Activated naive CD4-positive, alpha-beta T cell treated with anti-CD3 and anti-CD28 coated beads for 36 hours (primary cell): ENCODE measurements at regions of chr7 and their contacts with region 1.

Region 1: DNA sequence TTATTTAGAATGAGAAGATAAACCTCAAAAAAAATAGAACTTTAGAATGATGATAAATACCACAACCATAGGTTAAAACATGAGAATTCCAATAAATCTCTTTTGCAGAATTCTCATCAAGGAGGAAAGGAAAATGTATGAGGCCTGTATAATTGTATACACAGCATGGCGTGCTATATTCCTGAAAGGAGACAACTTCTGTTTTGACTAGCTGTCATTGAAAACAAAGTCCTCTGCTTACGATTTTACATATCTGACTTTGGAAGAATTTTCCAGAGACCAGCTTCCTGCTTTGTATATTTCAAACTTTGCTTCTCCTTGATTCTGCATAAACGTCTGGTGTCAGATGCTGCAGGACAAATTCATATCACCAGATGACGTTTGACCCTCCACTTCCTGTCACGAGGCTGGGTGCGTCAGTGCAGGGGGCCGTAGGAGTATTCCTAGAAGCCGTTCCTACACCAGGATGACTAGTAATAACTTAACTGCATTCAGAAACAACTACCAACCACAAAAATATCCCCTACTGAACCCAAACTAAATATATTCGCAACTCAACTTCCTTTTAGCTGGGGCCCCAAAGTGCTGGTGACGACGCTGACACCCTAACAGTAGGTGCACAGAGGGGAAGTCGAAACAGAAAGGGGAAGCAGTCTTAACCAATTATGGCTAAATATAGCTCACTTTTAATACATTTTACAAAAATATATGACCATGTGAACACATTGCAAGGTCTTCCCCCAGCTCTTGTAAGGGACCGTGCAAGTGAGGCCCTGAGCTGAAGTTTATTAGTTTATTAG is 178.6 kb upstream of the INHBA start:
- DNase-seq: peak; percentile 92
- H3K4me3 Mint-ChIP-seq: peak overlapping the region; percentile 19
- H3K27ac Mint-ChIP-seq: peak overlapping the region; percentile 98
- H3K4me1 Mint-ChIP-seq: peaks cover 53% of the 10 kb centered on the region
- H3K27me3 Mint-ChIP-seq: no peaks in the 10 kb centered on the region

Region 2: DNA sequence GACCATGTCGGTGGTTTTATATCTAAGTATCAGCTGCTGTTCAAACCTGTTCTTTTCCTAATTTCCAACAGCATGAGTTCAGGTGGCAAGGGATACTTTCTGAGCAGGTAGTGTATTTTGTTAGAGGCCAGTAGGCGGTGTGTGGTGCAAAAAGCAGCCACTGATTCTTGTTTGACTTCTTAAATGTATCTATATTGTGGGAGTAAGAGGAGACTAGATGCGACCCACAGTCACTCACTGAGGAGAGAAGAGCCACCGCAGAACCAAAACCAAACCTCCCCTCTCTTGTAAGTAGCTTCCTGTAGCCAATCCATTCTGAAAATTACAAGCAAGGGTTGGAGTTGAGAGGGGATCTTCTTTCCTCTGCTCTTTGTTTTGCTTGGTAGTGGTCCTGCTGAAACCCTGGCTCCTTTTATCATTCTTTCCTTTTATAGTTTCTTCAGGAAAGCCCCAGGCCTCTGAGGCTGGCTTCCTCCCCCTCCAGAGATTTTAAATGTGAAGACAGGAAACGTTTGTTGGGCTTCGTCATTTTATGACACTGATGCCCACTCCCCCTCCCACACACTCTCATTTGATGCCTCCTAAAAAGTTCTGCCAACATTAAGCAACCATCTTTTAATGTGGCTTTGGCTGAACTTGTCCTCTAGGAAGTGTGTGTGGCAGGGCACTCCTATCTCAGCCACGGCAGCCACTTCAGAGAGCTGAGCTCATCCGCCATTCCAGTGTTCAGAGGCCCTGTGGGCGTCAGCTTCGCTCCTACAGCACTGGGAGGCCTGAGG is 1180.7 kb before region 1 on chr7:
- CTCF ChIA-PET with region 1: no interaction called
- intact Hi-C with region 1: loop called (anchors 10 kb)
- DNase-seq: peak; percentile 57
- H3K4me3 Mint-ChIP-seq: no peak overlapping the region
- H3K27ac Mint-ChIP-seq: peak overlapping the region; percentile 68
- H3K4me1 Mint-ChIP-seq: peaks cover 26% of the 10 kb centered on the region
- H3K27me3 Mint-ChIP-seq: no peaks in the 10 kb centered on the region

Region 3: GRCh38 chr7:41847151-41847550 is 34.4 kb before region 1 on chr7:
- CTCF ChIA-PET with region 1: no interaction called
- intact Hi-C with region 1: loop called (anchors 1 kb)
- DNase-seq: no peak
- H3K4me3 Mint-ChIP-seq: no peak overlapping the region
- H3K27ac Mint-ChIP-seq: no peak overlapping the region
- H3K4me1 Mint-ChIP-seq: peaks cover 12% of the 10 kb centered on the region
- H3K27me3 Mint-ChIP-seq: peaks cover 6% of the 10 kb centered on the region

Region 4: DNA sequence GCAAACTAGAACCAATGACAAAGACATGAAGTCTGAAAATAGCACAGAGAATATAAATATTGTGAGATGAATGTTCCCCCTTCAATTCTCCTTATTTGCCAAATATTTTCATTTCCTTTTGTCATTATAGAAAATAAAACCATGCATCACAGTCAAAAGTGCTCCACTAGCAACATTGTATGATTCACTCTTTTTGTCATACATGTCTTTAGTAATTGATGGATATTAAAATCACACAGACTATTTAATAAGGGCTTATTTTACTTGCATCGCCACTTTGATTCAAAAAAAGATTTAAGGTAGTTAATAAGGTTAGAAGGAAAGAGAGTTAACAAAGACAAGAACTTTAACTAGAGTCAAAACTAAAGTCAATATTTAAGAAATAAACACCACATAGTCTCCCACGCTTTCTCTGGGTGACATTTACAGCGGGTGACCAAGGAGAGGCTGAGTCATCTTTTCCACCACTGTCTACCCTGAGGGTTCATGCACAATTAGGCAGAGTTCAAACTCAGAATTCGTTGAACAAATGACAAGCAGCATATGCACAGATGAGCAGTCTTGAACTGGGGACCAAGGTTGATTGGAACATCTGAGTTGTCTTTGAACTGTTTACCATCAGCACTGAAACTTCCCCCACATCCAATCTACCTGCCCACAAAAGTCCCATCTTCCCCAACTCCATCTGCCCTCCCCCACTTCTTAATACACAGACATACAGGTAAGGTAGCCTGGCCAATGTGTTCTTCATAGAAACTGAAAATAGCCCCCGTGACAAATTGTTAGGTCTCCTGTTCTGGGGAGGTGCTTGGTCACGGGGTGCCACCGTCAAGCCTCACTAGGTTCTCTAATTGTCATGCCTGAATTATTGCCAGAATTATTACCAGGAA is 987.8 kb after region 1 on chr7:
- CTCF ChIA-PET with region 1: no interaction called
- intact Hi-C with region 1: loop called (anchors 5 kb)
- DNase-seq: peak; percentile 63
- H3K4me3 Mint-ChIP-seq: no peak overlapping the region
- H3K27ac Mint-ChIP-seq: peak overlapping the region; percentile 68
- H3K4me1 Mint-ChIP-seq: peaks cover 16% of the 10 kb centered on the region
- H3K27me3 Mint-ChIP-seq: peaks cover 10% of the 10 kb centered on the region

Region 5: DNA sequence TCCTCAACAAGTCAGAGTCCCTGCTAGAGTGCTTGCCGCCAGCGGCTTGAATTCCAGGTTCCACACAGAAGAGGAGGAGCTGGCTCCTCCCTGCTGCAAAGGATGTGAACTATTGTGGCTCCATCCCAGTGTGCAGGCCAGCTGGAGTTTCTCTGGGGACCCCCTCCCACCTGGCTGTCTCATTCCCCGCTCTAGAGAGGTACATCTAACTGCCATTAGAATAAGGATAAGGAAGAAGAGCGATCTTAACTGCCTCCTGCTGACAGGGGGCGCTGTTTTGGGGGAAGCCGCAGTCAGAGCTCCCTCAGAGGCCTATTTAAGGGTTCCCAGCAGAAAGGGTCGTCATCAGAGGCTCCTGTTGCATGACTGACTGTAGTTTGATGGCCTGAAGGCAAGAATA is 1190.1 kb after region 1 on chr7:
- CTCF ChIA-PET with region 1: no interaction called
- intact Hi-C with region 1: loop called (anchors 1 kb)
- DNase-seq: peak; percentile 47
- H3K4me3 Mint-ChIP-seq: no peak overlapping the region
- H3K27ac Mint-ChIP-seq: no peak overlapping the region
- H3K4me1 Mint-ChIP-seq: peaks cover 6% of the 10 kb centered on the region
- H3K27me3 Mint-ChIP-seq: peaks cover 26% of the 10 kb centered on the region

Region 6: GRCh38 chr7:43669286-43670081 is 1788.0 kb after region 1 on chr7:
- CTCF ChIA-PET with region 1: no interaction called
- intact Hi-C with region 1: loop called (anchors 5 kb)
- DNase-seq: peak; percentile 90
- H3K4me3 Mint-ChIP-seq: peak overlapping the region; percentile 71
- H3K27ac Mint-ChIP-seq: peak overlapping the region; percentile 96
- H3K4me1 Mint-ChIP-seq: peaks cover 87% of the 10 kb centered on the region
- H3K27me3 Mint-ChIP-seq: no peaks in the 10 kb centered on the region